Activated CD8-positive, alpha-beta T cell treated with anti-CD3 and anti-CD28 coated beads for 36 hours (primary cell): ENCODE measurements at regions of chr4 and their contacts with region 1.

Region 1: GRCh38 chr4:145299380-145300076 is 119.1 kb upstream of the OTUD4 start:
- DNase-seq: peak; percentile 94
- ATAC-seq: peak; percentile 93
- H3K4me3 Mint-ChIP-seq: peak overlapping the region; percentile 5
- H3K27ac Mint-ChIP-seq: no peak overlapping the region
- H3K4me1 Mint-ChIP-seq: peaks cover 20% of the 10 kb centered on the region
- H3K27me3 Mint-ChIP-seq: peaks cover 15% of the 10 kb centered on the region
- CTCF ChIP-seq: no peak

Region 2: GRCh38 chr4:145285928-145286327 is 13.6 kb before region 1 on chr4:
- CTCF ChIA-PET with region 1: no interaction called
- POLR2A ChIA-PET with region 1: no interaction called
- intact Hi-C with region 1: no loop called
- DNase-seq: no peak
- ATAC-seq: no peak
- H3K4me3 Mint-ChIP-seq: no peak overlapping the region
- H3K27ac Mint-ChIP-seq: no peak overlapping the region
- H3K4me1 Mint-ChIP-seq: no peaks in the 10 kb centered on the region
- H3K27me3 Mint-ChIP-seq: peaks cover 11% of the 10 kb centered on the region
- CTCF ChIP-seq: no peak

Region 3: DNA sequence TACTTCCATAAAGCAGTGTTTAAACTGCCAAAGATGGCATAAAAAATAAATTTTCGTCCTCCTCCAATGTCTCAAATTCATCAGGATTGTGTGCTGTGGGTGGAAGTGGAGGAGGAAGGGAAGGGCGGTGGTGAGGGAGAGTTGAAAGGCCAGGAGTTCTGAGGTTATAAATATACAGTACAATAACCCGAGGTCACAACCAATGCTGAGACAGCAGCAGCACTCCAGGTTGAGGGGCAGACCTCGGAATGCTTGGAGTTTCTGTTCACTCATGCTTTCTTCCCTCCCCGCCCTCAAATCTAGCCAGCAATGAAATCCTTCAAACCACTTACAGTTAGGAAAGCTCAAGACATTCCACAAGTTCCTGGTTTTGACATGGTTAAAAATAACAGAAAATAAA is 48.2 kb after region 1 on chr4:
- CTCF ChIA-PET with region 1: no interaction called
- POLR2A ChIA-PET with region 1: no interaction called
- intact Hi-C with region 1: no loop called
- DNase-seq: no peak
- ATAC-seq: no peak
- H3K4me3 Mint-ChIP-seq: no peak overlapping the region
- H3K27ac Mint-ChIP-seq: no peak overlapping the region
- H3K4me1 Mint-ChIP-seq: peaks cover 3% of the 10 kb centered on the region
- H3K27me3 Mint-ChIP-seq: peaks cover 2% of the 10 kb centered on the region
- CTCF ChIP-seq: no peak

Region 4: GRCh38 chr4:145481164-145481941 is 181.8 kb after region 1 on chr4 and contains the start of gene SMAD1:
- CTCF ChIA-PET with region 1: no interaction called
- POLR2A ChIA-PET with region 1: no interaction called
- intact Hi-C with region 1: loop called (anchors 10 kb)
- DNase-seq: peak; percentile 41
- ATAC-seq: peak; percentile 43
- H3K4me3 Mint-ChIP-seq: peak within 1 kb of the TSS; percentile 69
- H3K27ac Mint-ChIP-seq: no peak within 1 kb of the TSS
- H3K4me1 Mint-ChIP-seq: peaks cover 5% of the 10 kb centered on the region
- H3K27me3 Mint-ChIP-seq: peaks cover 36% of the 10 kb centered on the region
- CTCF ChIP-seq: no peak
- total RNA-seq, gene SMAD1: 0.67 to 0.92 TPM